Activated CD8-positive, alpha-beta T cell treated with anti-CD3 and anti-CD28 coated beads for 36 hours (primary cell): ENCODE measurements at regions of chr13 and their contacts with region 1.

Region 1: DNA sequence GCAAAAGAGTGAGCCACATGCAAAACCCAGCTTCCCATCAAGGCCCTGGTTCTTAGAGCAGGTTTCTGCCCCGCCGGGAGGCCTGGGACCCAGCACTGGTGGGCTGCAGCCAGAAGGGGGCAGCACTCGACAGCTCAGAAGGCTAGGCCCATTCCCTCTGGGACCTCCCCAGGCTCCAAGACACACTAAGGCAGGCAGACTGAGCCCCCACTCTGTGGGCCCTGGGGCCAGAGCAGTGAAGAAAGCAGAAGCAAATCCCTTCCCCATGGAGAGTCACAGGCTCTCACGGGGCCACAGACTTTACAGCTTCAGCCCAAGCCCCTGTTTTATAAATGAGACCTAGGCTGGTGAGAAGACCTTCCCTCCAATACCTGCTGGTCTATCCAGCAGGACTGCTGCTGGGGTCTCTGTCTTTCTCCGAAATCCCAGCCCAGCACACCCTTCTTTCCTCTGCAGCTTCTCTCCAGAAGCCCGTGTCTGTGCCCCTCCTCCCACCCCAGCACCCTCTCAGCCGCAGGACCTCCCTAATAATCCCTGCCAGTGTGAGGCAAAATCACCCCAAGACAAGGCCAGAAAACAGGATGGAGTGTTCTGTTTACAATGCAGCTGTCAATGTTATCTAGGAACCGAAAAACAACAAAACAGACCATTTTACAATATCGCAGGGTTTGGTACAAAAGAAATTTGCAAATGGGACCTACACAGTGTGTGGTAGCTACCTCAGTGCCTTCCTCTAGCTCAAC is 109.3 kb downstream of the ABCC4 start:
- DNase-seq: peak; percentile 80
- ATAC-seq: peak; percentile 88
- H3K4me3 Mint-ChIP-seq: no peak overlapping the region
- H3K27ac Mint-ChIP-seq: no peak overlapping the region
- H3K4me1 Mint-ChIP-seq: peaks cover 6% of the 10 kb centered on the region
- H3K27me3 Mint-ChIP-seq: no peaks in the 10 kb centered on the region
- CTCF ChIP-seq: peak; percentile 77

Region 2: DNA sequence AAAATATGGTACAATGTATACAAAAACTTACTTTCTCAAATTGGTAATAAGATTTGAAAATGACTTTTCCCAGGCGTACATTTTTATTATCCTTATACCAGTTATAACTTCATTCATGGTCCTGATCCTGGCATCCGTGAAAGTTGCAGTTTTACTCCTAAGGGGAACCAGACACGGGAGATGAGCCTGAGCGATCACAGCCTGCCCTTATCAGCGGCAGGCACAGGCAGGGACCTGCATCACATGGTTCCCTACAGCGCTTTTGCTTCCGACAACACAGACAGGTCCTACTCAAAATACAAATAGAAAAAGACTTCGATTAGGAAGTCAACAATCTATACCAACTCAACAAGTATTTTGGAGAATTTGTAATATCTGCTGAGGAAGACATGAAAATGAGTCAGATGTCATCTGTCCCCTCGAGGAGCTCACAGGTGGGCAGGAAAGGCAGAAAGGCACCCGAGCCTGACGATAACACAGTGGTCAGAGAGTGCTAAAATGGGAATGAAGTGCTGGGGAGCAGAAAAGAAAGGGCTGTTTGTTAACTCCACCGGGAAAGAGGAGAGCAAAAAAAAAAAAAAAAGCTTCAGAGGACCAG is 15.9 kb after region 1 on chr13:
- CTCF ChIA-PET with region 1: interaction called, 12 read pairs
- POLR2A ChIA-PET with region 1: no interaction called
- intact Hi-C with region 1: no loop called
- DNase-seq: no peak
- ATAC-seq: no peak
- H3K4me3 Mint-ChIP-seq: no peak overlapping the region
- H3K27ac Mint-ChIP-seq: no peak overlapping the region
- H3K4me1 Mint-ChIP-seq: no peaks in the 10 kb centered on the region
- H3K27me3 Mint-ChIP-seq: no peaks in the 10 kb centered on the region
- CTCF ChIP-seq: no peak

Region 3: DNA sequence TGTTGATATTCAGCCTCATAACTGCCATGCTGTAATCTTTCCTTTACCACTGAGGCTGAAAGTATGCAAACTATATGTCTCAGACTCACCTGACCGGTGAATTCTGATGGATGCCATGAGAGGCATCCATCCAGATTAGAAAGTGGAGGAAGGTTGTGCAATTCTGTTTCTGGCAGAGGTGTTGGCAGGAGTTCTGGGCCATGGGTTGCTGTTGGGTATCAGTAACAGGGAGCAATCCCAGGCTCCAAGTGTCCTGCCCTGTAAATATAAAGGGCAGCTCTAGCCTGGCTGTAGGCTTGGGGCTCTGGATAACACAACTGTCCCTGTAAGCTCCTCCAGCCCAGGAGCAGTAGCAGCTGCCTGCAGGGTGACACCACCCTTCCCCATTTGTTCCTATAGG is 186.6 kb after region 1 on chr13:
- CTCF ChIA-PET with region 1: interaction called, 121 read pairs
- POLR2A ChIA-PET with region 1: interaction called, 6 read pairs
- intact Hi-C with region 1: loop called (anchors 1 kb)
- DNase-seq: no peak
- ATAC-seq: no peak
- H3K4me3 Mint-ChIP-seq: no peak overlapping the region
- H3K27ac Mint-ChIP-seq: no peak overlapping the region
- H3K4me1 Mint-ChIP-seq: peaks cover 3% of the 10 kb centered on the region
- H3K27me3 Mint-ChIP-seq: no peaks in the 10 kb centered on the region
- CTCF ChIP-seq: no peak

Region 4: GRCh38 chr13:95403828-95404522 is 212.0 kb after region 1 on chr13:
- CTCF ChIA-PET with region 1: interaction called, 309 read pairs
- POLR2A ChIA-PET with region 1: no interaction called
- intact Hi-C with region 1: loop called (anchors 1 kb)
- DNase-seq: peak; percentile 79
- ATAC-seq: peak; percentile 93
- H3K4me3 Mint-ChIP-seq: peak overlapping the region; percentile 79
- H3K27ac Mint-ChIP-seq: no peak overlapping the region
- H3K4me1 Mint-ChIP-seq: peaks cover 6% of the 10 kb centered on the region
- H3K27me3 Mint-ChIP-seq: peaks cover 7% of the 10 kb centered on the region
- CTCF ChIP-seq: peak; percentile 93

Region 5: DNA sequence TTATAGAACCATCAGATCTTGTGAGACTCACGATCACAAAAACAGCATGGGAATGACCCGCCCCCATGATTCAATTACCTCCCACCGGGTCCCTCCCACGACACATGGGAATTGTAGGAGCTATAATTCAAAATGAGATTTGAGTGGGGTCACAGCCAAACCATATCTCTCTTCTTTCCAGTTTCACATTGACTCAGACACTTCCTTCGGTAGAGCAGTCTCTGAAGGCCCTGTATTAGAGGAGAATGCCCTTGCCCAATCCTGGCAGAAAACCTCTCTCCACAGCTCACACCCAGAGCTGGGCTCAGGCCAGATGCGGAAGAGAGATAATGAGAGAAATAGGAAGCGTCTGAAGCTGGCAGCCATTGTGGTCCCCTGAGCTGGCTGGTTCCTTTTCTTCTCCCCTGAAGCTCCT is 288.1 kb after region 1 on chr13:
- CTCF ChIA-PET with region 1: interaction called, 7 read pairs
- POLR2A ChIA-PET with region 1: no interaction called
- intact Hi-C with region 1: loop called (anchors 2 kb)
- DNase-seq: peak; percentile 14
- ATAC-seq: peak; percentile 28
- H3K4me3 Mint-ChIP-seq: no peak overlapping the region
- H3K27ac Mint-ChIP-seq: no peak overlapping the region
- H3K4me1 Mint-ChIP-seq: peaks cover 11% of the 10 kb centered on the region
- H3K27me3 Mint-ChIP-seq: no peaks in the 10 kb centered on the region
- CTCF ChIP-seq: no peak